ENCODE measurements at regions of chr1 and their contacts with region 1.

Region 1: GRCh38 chr1:153545067-153546055 is at the start of gene S100A4:
- DNase-seq: peak; percentile 83
- H3K4me3 ChIP-seq: no peak within 1 kb of the TSS
- H3K27ac ChIP-seq: peak within 1 kb of the TSS; percentile 72 to 76
- H3K4me1 ChIP-seq: peaks cover 58 to 65% of the 10 kb centered on the region in 2 experiments; a peak in 3 of 4 replicates
- H3K27me3 ChIP-seq: no peaks in the 10 kb centered on the region
- CTCF ChIP-seq: no peak
- EP300 ChIP-seq: peak in 1 of 2 experiments; percentile 52; a peak in 1 of 4 replicates
- RAD21 ChIP-seq: no peak
- polyA plus RNA-seq, gene S100A4: 24.6 and 25.4 TPM in 2 replicates

Region 2: GRCh38 chr1:153306303-153307220 is 238.8 kb before region 1 on chr1:
- CTCF ChIA-PET with region 1: no interaction called
- POLR2A ChIA-PET with region 1: no interaction called
- DNase-seq: no peak
- H3K4me3 ChIP-seq: no peak overlapping the region
- H3K27ac ChIP-seq: no peak overlapping the region
- H3K4me1 ChIP-seq: no peaks in the 10 kb centered on the region
- H3K27me3 ChIP-seq: peaks cover 36% of the 10 kb centered on the region; the same call in 1 of the 2 replicates
- CTCF ChIP-seq: no peak
- EP300 ChIP-seq: no peak
- RAD21 ChIP-seq: no peak

Region 3: DNA sequence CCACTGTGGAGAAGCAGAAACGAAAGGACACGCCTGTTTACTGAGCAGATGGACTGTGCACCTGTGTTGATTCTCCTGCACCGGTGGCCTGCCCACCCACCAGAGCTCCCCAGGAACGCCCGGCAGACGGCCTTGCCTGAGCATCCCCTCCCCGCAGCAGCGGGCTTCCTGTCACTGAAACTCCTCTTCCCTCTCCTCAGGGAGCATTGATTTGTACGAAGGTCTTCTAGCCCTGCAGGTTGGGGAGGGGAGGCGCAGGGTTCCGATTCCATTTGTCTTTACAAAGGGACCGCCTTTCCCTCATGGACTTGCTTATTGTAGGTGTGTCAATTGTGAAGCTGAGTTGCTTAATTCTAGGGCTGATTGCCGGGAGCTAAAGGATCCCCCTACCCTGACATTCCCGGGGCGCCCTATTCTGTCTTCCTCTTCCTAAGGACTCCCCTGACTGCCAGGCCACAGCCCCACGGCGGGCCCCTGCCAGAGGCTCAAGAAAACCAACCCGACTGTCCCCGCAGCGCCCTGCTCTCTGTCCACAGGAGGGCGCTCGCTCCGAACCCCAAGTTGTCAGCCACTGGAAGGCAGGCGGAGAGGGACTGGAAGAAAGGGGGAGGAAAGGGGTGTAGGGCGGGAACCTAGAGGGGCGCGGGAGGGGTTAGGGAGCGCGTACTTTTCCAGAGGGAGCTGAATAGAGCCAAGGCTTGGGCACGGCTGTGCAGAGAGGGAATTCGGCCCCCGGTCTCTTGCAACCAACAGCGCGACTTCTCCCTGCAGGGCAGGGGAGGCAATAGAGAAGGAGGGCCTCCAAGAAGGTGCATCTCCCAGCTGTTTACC is 12.4 kb before region 1 on chr1:
- CTCF ChIA-PET with region 1: interaction called, 4 read pairs
- POLR2A ChIA-PET with region 1: interaction called, 12 read pairs
- DNase-seq: no peak
- H3K4me3 ChIP-seq: peak overlapping the region in 1 of 2 experiments; percentile 79; a peak in 3 of 4 replicates
- H3K27ac ChIP-seq: peak overlapping the region; percentile 1 to 87; a peak in 3 of 4 replicates
- H3K4me1 ChIP-seq: peaks cover 24 to 31% of the 10 kb centered on the region in 2 experiments; a peak in 3 of 4 replicates
- H3K27me3 ChIP-seq: no peaks in the 10 kb centered on the region
- CTCF ChIP-seq: peak; percentile 62
- EP300 ChIP-seq: no peak
- RAD21 ChIP-seq: 0 out of 2 replicates have a peak, but pooled peaks have one; percentile 9